K562 (cell line): ENCODE measurements at regions of chr9 and their contacts with region 1.

Region 1: DNA sequence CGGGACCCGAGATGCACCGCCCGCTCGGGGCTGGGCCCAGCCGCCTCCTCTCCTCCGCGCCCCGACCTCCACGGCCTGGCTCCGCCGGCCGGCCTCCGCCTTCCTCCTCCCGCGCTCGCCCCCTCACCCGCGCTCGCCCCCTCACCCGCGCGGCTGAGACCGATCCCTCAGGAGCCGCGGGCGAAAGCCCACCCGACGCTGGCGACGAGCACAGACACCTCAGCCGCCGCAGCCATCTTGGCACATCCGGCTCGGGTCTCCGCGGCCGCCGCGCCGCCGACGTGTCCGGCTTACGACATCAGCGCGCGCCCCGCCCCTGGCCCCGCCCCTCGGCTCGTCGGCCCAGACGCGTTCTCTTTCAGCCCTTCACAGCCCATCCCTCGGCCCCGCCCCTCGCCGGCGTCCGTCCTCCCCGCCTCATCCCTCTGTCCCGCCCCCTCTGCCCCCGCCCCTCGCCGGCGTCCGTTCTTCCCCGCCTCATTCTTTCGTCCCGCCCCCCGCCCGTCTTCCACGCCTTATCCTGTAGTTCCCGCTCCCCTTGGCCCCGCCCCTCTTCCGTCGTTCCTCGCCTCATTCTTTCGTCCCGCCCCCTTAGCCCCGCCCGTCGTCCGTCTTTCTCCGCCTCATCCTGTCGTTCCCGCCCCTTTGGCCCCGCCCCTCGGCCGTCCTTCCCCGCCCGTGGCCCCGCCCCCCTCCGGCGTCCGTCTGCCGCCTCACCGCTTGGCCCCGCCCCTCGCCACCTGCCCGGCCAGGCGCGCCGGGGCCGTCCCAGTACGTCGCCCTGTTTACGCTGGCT is at the start of gene SEC16A:
- DNase-seq: peak; percentile 89 to 98 (median 93)
- ATAC-seq: peak; percentile 83
- H3K4me3 ChIP-seq: peak within 1 kb of the TSS; percentile 97
- H3K27ac ChIP-seq: peak within 1 kb of the TSS; percentile 100
- H3K4me1 ChIP-seq: peaks cover 17 to 38% of the 10 kb centered on the region in 2 experiments
- H3K27me3 ChIP-seq: peaks cover 0 to 15% of the 10 kb centered on the region in 2 experiments; a peak in 2 of 5 replicates
- CTCF ChIP-seq: no peak
- EP300 ChIP-seq: no peak
- POLR2A ChIP-seq: peak; percentile 83
- RAD21 ChIP-seq: no peak
- polyA plus RNA-seq, gene SEC16A: 8.3 to 12.0 TPM

Region 2: GRCh38 chr9:136471802-136472487 is 11.0 kb before region 1 on chr9:
- CTCF ChIA-PET with region 1: no interaction called
- POLR2A ChIA-PET with region 1: interaction called, 17 read pairs
- in situ Hi-C with region 1: no loop called
- intact Hi-C with region 1: no loop called
- DNase-seq: no peak
- ATAC-seq: no peak
- H3K4me3 ChIP-seq: no peak overlapping the region
- H3K27ac ChIP-seq: no peak overlapping the region
- H3K4me1 ChIP-seq: peaks cover 0 to 23% of the 10 kb centered on the region in 2 experiments; a peak in 3 of 5 replicates
- H3K27me3 ChIP-seq: no peaks in the 10 kb centered on the region
- CTCF ChIP-seq: no peak
- EP300 ChIP-seq: no peak
- POLR2A ChIP-seq: no peak
- RAD21 ChIP-seq: no peak

Region 3: DNA sequence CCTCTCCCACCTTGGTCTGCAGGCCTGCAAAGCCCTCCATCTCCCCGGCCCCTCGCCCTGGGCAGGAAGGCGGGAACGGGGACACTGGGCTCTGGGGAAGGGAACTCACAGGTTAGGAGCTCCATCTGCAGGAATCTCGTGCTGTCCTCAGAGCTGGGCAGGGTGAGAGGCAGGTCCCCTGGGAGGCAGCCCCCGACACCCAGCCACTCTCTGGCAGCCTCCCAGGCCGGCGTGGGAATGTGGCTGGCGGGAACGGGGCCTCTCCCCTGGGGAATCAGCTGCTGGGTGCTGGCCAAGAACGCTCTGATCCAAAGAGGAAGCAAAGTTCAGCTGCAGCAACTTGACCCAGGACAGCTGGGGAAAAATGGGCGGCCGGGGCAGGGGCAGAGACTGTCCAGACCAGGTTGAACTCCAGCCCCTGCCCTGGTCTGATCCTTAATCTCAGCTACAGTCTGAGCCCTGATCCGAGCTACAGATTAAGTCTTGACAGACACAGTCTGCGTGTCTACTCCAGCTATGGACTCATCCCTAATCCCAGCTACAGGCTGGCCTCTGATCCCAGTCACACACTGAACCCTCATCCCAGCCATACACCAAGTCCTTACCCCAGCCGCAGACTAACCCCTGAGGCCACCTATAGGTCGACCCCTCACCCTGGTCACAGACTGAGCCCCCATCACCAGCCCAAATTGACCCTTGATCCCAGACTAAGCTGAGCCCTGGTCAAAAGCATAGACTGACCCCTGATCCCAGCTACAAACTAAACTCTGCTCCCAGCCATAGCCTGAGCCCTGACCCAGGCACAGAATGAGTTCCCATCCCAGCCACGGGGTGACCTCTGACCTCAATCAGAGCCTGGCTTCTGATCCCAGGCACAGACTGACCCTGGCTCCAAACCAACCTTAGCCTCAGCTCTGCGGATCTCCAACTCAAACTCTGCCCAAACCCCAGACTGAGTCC is 142.4 kb after region 1 on chr9:
- CTCF ChIA-PET with region 1: interaction called, 154 read pairs
- POLR2A ChIA-PET with region 1: interaction called, 5 read pairs
- in situ Hi-C with region 1: no loop called
- intact Hi-C with region 1: no loop called
- DNase-seq: peak in 3 of 4 experiments; percentile 47 to 67 (median 51)
- ATAC-seq: peak; percentile 72
- H3K4me3 ChIP-seq: no peak overlapping the region
- H3K27ac ChIP-seq: no peak overlapping the region
- H3K4me1 ChIP-seq: peaks cover 0 to 92% of the 10 kb centered on the region in 2 experiments; a peak in 4 of 5 replicates
- H3K27me3 ChIP-seq: peaks cover 0 to 12% of the 10 kb centered on the region in 2 experiments; a peak in 1 of 5 replicates
- CTCF ChIP-seq: peak; percentile 51 to 67 (median 61); a peak in 5 of 6 replicates
- EP300 ChIP-seq: no peak
- POLR2A ChIP-seq: no peak
- RAD21 ChIP-seq: peak; percentile 73 to 88

Region 4: DNA sequence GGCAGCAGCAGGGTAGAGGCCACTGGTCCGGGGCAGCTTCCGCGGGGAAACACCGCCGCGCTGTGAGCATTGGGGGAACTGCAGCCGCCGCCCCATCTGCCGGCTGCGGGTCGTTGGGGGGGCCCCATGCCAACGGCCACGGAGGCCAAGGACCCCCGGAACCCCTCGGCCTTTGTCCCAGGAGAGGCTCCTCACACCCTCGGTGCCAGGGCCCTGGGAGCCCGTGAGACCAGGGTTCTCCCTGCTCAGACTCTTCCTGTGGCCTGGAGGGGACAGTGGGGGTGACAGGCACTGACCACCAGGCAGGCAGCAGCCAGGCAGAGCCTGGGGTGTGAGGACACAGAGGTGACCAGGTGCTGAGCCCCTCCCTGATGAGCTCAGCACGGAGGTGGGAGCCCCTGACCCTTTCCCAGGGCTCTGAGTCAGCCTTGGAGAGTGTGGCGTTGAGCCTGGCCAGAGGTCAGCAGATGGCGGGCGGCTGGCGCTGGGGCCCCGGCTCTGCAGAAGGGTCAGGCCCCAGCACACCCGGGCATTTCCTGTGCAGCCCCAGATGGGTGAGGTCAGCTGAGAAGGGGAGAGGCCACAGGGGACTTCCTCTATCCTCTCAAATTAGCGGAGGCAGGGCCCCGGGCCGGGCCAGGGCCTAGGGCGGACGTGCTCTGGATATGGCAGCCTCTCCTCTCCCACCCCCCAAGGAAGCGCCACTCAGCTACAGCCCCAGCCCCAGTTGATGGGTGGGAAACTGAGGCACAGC is 161.8 kb after region 1 on chr9:
- CTCF ChIA-PET with region 1: interaction called, 11 read pairs
- POLR2A ChIA-PET with region 1: no interaction called
- in situ Hi-C with region 1: no loop called
- intact Hi-C with region 1: no loop called
- DNase-seq: peak; percentile 60 to 88 (median 72)
- ATAC-seq: peak; percentile 75
- H3K4me3 ChIP-seq: peak overlapping the region; percentile 41
- H3K27ac ChIP-seq: peak overlapping the region; percentile 83
- H3K4me1 ChIP-seq: peaks cover 39 to 62% of the 10 kb centered on the region in 2 experiments
- H3K27me3 ChIP-seq: no peaks in the 10 kb centered on the region
- CTCF ChIP-seq: peak; percentile 88 to 91 (median 90)
- EP300 ChIP-seq: peak; percentile 15; the same call in 1 of the 2 replicates
- POLR2A ChIP-seq: no peak
- RAD21 ChIP-seq: peak; percentile 63 to 81

Region 5: DNA sequence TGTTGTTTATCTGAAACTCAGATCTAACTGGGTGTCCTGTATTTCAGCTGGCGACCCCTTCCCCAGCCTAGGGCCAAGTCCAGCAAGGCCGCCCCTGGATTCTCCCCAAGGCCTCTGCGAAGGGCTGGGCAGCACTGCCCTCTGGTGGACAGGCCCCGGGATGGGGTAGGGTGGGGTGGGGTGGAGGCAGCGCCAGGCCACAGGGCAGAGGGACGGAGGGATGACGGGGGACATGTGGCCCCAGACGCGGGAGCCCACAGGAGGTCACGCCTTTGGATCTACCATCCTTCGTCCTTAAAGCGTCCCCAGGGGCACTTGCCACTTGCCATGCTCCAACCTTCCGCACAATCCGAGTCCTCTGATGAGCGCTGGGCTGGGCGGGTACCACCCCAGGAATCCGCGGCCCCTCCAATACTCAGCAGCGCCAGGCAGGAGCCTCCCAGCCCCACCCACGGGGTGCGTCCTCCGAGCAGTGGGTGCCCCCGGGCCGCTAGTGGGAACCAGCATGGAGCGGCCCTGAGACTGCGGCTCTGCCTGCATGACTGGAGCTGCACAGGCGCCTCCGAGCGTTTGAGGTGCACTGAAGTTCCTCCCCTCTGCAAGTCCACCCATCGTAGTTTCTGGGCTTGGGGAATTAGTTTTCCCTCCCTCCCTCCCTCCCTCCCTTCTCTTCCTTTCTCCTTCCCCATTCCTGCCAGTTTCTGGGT is 211.4 kb after region 1 on chr9:
- CTCF ChIA-PET with region 1: interaction called, 4 read pairs
- POLR2A ChIA-PET with region 1: no interaction called
- in situ Hi-C with region 1: no loop called
- intact Hi-C with region 1: loop called (anchors 5 kb)
- DNase-seq: peak; percentile 82 to 94 (median 87)
- ATAC-seq: peak; percentile 95
- H3K4me3 ChIP-seq: no peak overlapping the region
- H3K27ac ChIP-seq: no peak overlapping the region
- H3K4me1 ChIP-seq: peaks cover 9 to 74% of the 10 kb centered on the region in 2 experiments; a peak in 4 of 5 replicates
- H3K27me3 ChIP-seq: no peaks in the 10 kb centered on the region
- CTCF ChIP-seq: peak; percentile 85 to 94 (median 85)
- EP300 ChIP-seq: no peak
- POLR2A ChIP-seq: no peak
- RAD21 ChIP-seq: peak; percentile 87 to 90